Left cardiac atrium (tissue), 4 donors: ENCODE measurements at regions of chr12 and their contacts with region 1.

Region 1: DNA sequence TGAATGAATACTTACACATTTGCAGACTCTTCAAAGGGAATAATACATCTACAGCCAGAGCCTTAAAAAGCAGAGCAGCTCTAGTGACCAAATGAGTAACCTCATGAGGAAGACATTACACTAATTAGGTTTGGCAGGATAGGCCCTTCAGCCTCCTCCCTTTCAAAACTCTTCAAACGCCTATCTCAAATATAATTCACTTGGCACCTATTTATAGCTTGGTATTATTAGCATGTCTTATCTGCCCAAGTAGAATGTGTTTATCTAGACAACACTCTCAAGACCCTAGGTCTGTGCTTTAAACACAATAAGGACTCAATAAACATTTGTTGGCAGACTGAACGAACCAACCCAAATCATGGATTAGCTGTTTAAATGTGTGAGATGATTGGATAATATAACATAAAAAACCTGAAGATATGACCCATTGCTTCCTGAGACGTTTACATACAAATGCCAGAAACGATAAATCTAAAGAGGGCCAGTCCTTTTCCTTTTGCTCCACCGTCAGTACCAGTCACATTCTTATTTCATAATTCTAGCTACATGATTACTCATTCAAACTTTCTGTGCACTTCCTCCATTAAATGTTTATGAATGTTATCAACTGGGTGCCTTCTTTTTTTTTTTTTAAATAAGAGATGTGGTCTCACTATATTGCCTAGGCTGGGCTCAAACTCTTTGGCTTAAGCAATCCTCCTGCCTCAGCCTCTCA is 123.3 kb downstream of the CEP83 start:
- DNase-seq: no peak
- ATAC-seq: peak; percentile 61 to 66

Region 2: DNA sequence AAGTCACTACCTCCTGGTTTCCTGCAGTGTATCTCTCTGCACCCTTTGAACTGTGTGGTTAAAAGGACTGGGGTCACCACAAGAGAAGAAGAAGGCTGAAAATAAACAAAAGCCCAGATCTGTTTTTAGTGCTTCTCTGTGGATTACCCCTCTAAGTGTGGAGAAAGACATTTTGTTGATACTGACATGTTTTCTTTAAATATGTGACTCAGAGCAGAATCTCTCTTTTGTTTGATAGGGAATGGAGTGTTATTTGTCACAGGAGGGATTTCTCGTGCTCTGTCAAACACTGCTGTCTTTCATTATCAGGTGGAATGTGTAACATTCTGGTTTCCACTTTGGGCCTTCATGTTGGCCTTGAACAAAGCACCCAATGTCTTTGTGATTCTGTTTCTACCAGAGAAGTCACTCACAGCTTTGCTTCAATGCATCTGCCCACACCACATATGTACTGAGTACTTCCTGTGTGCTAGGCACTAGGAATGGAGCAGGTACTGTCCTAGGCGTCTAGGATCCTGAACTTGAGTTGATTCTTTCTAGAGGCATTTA is 105.9 kb before region 1 on chr12:
- intact Hi-C with region 1: no loop called
- DNase-seq: no peak
- ATAC-seq: no peak

Region 3: DNA sequence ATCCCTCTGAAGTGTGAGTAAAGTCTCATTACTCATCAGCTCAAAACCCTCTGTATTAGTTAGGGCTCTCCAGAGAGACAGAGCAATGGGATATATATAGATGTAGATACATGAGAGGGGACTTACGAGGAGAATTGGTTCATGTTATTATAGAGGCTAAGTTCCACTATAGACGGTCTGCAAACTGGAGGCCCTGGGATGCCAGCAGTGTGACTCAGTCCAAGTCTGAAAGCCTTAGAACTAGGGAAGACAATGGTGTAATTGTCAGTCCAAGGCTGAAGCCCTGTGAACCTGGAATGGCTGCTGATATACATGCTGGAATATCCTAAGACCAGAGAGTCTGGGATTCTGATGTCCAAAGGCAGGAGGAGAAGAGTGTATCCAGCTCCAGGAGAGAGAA is 180.6 kb after region 1 on chr12:
- intact Hi-C with region 1: loop called in 1 of 2 experiments (anchors 10 kb)
- DNase-seq: no peak
- ATAC-seq: no peak